ENCODE measurements at regions of chr9 and their contacts with region 1.

Region 1: DNA sequence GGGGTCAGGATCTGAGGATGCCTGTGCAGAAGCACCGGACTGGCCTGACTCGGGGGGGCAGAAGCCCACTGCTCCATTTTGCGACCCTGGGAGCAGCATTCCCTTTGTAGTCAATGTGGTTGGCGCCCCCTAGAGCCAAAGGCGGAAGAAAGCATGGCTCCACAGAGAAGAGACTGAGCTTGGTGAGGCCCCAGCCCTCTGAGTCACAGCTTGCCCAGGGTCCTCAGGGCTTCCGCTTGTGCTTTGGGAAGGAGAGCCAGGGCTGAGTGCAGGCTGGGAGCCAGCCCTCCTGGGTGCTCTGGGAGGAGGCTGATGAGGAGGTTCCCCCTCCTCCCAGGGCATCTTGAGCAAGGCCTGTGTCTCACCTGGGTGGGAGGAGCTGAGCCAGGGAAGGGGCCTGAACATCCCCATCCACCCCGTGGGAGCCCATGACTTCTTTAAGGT is 5.5 kb upstream of the AQP3 start:
- DNase-seq: peak; percentile 56 to 65 (median 62)
- H3K4me3 ChIP-seq: no peak overlapping the region
- H3K27ac ChIP-seq: no peak overlapping the region
- H3K4me1 ChIP-seq: peaks cover 0 to 11% (median 7%) of the 10 kb centered on the region in 4 experiments
- H3K27me3 ChIP-seq: peaks cover 0 to 6% (median 2%) of the 10 kb centered on the region in 5 experiments

Region 2: DNA sequence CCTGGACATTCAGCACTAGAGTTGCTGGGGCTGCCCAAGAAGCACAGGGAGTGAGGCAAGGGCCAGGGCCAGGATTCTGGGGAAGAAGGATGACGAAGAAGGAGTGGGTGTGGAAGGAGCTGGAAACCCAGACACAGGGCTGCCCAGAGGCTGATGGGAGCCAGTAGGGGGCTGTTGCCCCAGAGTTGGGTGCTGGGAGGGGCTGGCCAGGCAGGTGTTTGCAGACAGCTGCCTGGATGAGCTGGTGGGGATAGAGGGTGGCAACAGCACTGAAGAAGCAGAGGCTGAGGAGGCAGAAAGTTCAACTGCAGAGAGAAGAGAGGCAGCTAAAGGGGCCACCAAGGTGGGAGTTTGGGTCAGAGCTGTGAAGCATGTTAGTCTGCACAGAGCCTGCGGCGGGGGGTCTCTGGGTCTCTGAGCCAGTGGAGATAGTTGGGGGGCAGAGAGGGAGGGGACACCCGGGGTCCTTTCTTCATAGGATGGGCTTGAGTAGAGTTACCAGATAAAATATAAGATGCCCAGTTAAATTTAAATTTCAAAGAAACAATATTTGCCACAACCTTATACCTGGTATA is 48.0 kb before region 1 on chr9:
- CTCF ChIA-PET with region 1: interaction called, 11 read pairs
- POLR2A ChIA-PET with region 1: interaction called, 3 read pairs
- DNase-seq: no peak
- H3K4me3 ChIP-seq: no peak overlapping the region
- H3K27ac ChIP-seq: no peak overlapping the region
- H3K4me1 ChIP-seq: no peaks in the 10 kb centered on the region
- H3K27me3 ChIP-seq: no peaks in the 10 kb centered on the region

Region 3: DNA sequence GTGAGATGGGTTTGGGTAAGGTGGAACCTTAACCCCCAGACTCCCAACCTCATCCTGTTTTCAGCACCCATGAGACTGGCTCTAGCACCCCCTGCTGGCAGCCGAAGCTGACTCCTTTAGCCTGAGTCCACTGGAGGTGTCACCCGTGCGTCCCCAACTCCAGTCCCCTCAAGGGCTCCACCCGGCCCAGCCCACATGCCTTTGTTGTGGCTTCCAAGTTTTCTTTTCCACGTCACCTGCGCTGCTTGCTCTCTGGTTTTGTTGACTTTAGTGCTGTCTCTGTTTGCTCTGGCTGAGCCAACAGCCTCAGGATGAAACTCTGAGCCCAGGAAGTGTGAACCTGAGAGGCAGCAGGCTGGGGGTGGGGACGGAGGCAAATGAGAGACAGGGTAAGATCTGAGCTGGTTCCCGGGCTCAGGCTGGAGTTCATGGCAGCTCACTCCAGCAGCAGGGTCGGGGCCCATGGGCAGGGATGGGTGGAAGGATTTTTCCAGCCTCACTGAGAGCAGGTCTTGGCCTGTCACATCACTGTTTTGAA is 37.3 kb before region 1 on chr9:
- CTCF ChIA-PET with region 1: interaction called, 16 read pairs
- POLR2A ChIA-PET with region 1: no interaction called
- DNase-seq: peak; percentile 53 to 74 (median 64)
- H3K4me3 ChIP-seq: no peak overlapping the region
- H3K27ac ChIP-seq: no peak overlapping the region
- H3K4me1 ChIP-seq: peaks cover 0 to 10% (median 3%) of the 10 kb centered on the region in 4 experiments
- H3K27me3 ChIP-seq: no peaks in the 10 kb centered on the region

Region 4: GRCh38 chr9:33436440-33436839 is 16.4 kb before region 1 on chr9:
- CTCF ChIA-PET with region 1: interaction called, 23 read pairs
- POLR2A ChIA-PET with region 1: interaction called, 3 read pairs
- DNase-seq: no peak
- H3K4me3 ChIP-seq: no peak overlapping the region
- H3K27ac ChIP-seq: no peak overlapping the region
- H3K4me1 ChIP-seq: peaks cover 0 to 7% (median 1%) of the 10 kb centered on the region in 4 experiments
- H3K27me3 ChIP-seq: no peaks in the 10 kb centered on the region

Region 5: DNA sequence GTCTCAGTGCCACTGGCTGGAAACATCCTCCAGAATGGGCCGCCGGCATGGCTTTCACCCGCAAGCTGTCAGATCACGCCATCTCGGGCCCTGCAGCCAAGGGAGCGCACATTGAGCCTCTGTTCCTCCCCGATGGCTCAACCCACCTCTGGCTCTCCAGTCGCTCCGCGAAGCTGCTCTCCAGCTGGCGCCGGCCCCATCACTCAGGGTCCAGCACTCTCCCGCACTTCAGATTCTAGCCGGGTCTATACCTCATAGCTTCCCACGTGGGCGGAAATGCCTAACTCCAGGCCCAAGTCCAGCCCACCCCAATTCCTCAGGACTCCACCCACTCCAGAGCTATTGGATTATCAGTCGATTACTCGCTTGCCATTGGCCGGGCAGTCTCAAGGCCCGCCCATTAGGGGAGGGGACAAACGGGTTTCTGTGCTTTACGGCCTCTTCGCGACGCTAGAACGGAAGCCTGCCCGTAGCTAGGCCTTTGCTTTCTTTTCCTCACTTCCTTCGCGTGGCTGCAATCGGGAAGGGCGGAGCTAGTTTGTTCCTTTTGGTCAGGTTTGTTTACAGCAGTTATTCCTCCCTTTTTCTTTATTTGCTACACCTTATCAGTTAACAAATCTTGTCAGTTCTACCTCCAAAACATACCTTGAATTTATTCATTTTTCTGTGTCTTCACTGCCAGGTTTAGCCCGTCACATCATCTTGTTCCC is 20.9 kb after region 1 on chr9 and contains the start of gene NOL6:
- CTCF ChIA-PET with region 1: interaction called, 172 read pairs
- POLR2A ChIA-PET with region 1: no interaction called
- DNase-seq: peak; percentile 99 to 100 (median 99)
- H3K4me3 ChIP-seq: peak within 1 kb of the TSS; percentile 82 to 100 (median 95)
- H3K27ac ChIP-seq: peak within 1 kb of the TSS; percentile 84 to 90
- H3K4me1 ChIP-seq: peaks cover 5 to 22% (median 15%) of the 10 kb centered on the region in 4 experiments
- H3K27me3 ChIP-seq: no peaks in the 10 kb centered on the region

Measured in common myeloid progenitor, CD34-positive (primary cell).